ENCODE measurements at regions of chr1 and their contacts with region 1.

Region 1: GRCh38 chr1:28248283-28249012 is 10.9 kb upstream of the SESN2 start:
- DNase-seq: peak; percentile 84
- H3K4me3 Mint-ChIP-seq: peak overlapping the region; percentile 47
- H3K27ac Mint-ChIP-seq: peak overlapping the region; percentile 84
- H3K4me1 Mint-ChIP-seq: peaks cover 42% of the 10 kb centered on the region
- H3K27me3 Mint-ChIP-seq: no peaks in the 10 kb centered on the region
- CTCF ChIP-seq: peak; percentile 81

Region 2: GRCh38 chr1:28144203-28145135 is 104.0 kb before region 1 on chr1:
- CTCF ChIA-PET with region 1: no interaction called
- POLR2A ChIA-PET with region 1: no interaction called
- intact Hi-C with region 1: no loop called
- DNase-seq: peak; percentile 86
- H3K4me3 Mint-ChIP-seq: no peak overlapping the region
- H3K27ac Mint-ChIP-seq: no peak overlapping the region
- H3K4me1 Mint-ChIP-seq: peaks cover 8% of the 10 kb centered on the region
- H3K27me3 Mint-ChIP-seq: no peaks in the 10 kb centered on the region
- CTCF ChIP-seq: no peak

Region 3: DNA sequence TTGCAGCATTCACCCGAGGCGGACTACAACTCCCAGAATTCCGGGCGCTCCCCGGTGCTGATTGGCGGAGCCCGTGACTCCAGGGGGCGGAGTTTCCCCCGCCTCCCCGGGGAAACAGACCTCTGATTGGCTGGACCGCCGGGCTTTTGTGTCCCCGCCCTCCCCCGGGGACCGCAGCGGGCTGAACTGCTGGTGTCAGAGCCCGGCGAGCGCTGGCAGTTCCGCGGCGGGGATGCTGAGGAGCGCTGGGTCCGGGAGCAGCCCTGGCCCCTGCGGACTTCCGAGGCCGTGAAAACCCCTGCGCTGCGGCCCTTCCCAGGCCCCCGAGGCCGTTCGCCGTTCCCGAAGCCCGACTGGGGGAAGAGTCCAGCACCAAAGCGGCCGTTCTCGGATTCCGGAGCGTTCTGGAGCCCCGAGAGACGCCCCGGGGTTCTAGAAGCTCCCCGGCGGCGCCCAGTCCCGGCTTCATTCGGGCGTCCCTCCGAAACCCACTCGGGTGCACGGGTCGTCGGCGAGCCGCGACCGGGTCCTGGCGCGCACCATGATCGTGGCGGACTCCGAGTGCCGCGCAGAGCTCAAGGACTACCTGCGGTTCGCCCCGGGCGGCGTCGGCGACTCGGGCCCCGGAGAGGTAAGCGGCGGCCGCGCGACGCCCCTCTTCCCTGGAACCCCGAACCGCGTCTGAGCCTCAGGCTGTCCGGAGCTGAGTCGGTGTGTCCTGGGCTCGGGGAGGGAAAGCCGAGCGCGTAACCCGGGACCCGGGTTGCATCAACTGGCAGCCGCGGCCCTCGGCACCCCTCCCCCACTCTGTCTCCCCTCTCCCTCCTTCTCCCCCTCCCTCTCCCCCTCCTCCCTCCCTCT is 11.1 kb after region 1 on chr1 and contains the start of gene SESN2:
- CTCF ChIA-PET with region 1: interaction called, 46 read pairs
- POLR2A ChIA-PET with region 1: interaction called, 362 read pairs
- intact Hi-C with region 1: loop called (anchors 1 kb)
- DNase-seq: peak; percentile 99
- H3K4me3 Mint-ChIP-seq: peak within 1 kb of the TSS; percentile 86
- H3K27ac Mint-ChIP-seq: peak within 1 kb of the TSS; percentile 98
- H3K4me1 Mint-ChIP-seq: peaks cover 22% of the 10 kb centered on the region
- H3K27me3 Mint-ChIP-seq: no peaks in the 10 kb centered on the region
- CTCF ChIP-seq: no peak
- total RNA-seq, gene SESN2: 106 and 118 TPM in 2 replicates

Region 4: GRCh38 chr1:28282426-28283407 is 34.3 kb after region 1 on chr1:
- CTCF ChIA-PET with region 1: interaction called, 15 read pairs
- POLR2A ChIA-PET with region 1: interaction called, 7 read pairs
- intact Hi-C with region 1: no loop called
- DNase-seq: no peak
- H3K4me3 Mint-ChIP-seq: no peak overlapping the region
- H3K27ac Mint-ChIP-seq: no peak overlapping the region
- H3K4me1 Mint-ChIP-seq: no peaks in the 10 kb centered on the region
- H3K27me3 Mint-ChIP-seq: no peaks in the 10 kb centered on the region
- CTCF ChIP-seq: no peak

Region 5: DNA sequence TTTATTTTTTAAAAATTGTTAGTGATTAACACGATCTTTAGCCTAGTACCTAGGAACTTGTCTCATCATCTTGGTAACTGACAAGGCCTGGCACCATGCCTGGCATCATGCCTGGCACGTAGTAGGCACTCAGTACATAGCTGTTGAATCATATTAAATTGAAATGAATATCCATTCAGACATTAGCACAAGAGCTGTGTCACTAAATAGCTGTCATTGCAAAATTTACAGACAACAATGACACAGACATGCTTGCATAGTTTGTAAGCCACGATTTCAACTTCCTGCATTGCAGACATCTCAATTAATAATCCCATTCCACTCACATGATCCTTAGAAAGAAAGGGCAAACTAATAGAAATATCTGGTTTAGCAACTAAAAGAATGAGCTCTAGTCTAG is 105.7 kb after region 1 on chr1:
- CTCF ChIA-PET with region 1: interaction called, 19 read pairs
- POLR2A ChIA-PET with region 1: interaction called, 24 read pairs
- intact Hi-C with region 1: loop called (anchors 2 kb)
- DNase-seq: peak; percentile 37
- H3K4me3 Mint-ChIP-seq: no peak overlapping the region
- H3K27ac Mint-ChIP-seq: peak overlapping the region; percentile 81
- H3K4me1 Mint-ChIP-seq: peaks cover 5% of the 10 kb centered on the region
- H3K27me3 Mint-ChIP-seq: no peaks in the 10 kb centered on the region
- CTCF ChIP-seq: no peak

Region 6: GRCh38 chr1:28409090-28409489 is 160.6 kb after region 1 on chr1:
- CTCF ChIA-PET with region 1: interaction called, 7 read pairs
- POLR2A ChIA-PET with region 1: interaction called, 4 read pairs
- intact Hi-C with region 1: loop called (anchors 5 kb)
- DNase-seq: no peak
- H3K4me3 Mint-ChIP-seq: no peak overlapping the region
- H3K27ac Mint-ChIP-seq: no peak overlapping the region
- H3K4me1 Mint-ChIP-seq: no peaks in the 10 kb centered on the region
- H3K27me3 Mint-ChIP-seq: no peaks in the 10 kb centered on the region
- CTCF ChIP-seq: no peak

Region 7: DNA sequence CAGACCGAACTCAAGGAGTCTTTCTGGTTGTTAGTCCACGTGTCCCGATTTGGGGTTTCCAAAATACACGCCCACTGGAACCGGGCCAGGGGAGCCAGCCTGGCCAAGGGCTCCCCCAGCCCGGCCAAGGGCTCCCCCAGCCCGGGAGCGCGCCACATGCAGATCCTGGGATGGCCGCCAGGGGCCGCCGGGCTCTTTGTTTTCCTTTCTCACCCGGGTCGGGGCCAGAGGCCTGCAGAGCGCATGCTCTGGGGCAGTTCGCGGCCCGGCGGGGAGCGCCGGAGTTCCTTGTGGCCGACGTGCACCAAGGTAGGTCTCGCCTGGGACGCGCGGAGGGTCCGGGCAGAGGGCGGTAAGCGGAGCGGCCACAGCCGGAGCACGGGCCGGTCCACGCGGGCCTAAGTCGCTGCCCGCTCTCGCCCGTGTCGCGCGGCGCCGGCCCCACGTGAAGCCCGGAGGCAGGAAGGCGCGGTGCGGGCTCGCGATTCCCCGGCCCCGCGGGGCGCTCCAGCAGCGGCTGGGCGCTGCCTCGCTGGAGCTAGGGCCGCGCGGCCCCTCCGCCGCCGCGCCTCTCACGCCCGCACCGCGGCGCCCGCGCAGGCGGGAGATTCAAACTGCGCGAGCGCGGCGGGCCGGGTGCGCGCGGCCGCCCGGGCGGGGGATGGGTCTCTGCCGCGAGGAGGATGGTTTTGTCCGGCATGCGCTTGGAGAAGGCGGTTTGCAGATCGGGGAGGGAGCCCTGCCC is 269.7 kb after region 1 on chr1:
- CTCF ChIA-PET with region 1: no interaction called
- POLR2A ChIA-PET with region 1: interaction called, 16 read pairs
- intact Hi-C with region 1: loop called (anchors 5 kb)
- DNase-seq: peak; percentile 89
- H3K4me3 Mint-ChIP-seq: peak overlapping the region; percentile 69
- H3K27ac Mint-ChIP-seq: peak overlapping the region; percentile 75
- H3K4me1 Mint-ChIP-seq: peaks cover 29% of the 10 kb centered on the region
- H3K27me3 Mint-ChIP-seq: no peaks in the 10 kb centered on the region
- CTCF ChIP-seq: peak; percentile 93

Measured in MCF 10A (cell line).